ENCODE measurements at regions of chr5 and their contacts with region 1.

Region 1: GRCh38 chr5:146173597-146173996 is 8.9 kb downstream of the LARS1 start:
- DNase-seq: no peak
- H3K4me3 ChIP-seq: no peak overlapping the region
- H3K27ac ChIP-seq: no peak overlapping the region
- H3K4me1 ChIP-seq: no peaks in the 10 kb centered on the region
- H3K27me3 ChIP-seq: no peaks in the 10 kb centered on the region
- CTCF ChIP-seq: no peak
- POLR2A ChIP-seq: no peak

Region 2: GRCh38 chr5:145307866-145308382 is 865.7 kb before region 1 on chr5:
- CTCF ChIA-PET with region 1: no interaction called
- POLR2A ChIA-PET with region 1: no interaction called
- dilution Hi-C with region 1: no loop called
- intact Hi-C with region 1: loop called (anchors 5 kb)
- DNase-seq: no peak
- H3K4me3 ChIP-seq: no peak overlapping the region
- H3K27ac ChIP-seq: no peak overlapping the region
- H3K4me1 ChIP-seq: no peaks in the 10 kb centered on the region
- H3K27me3 ChIP-seq: no peaks in the 10 kb centered on the region
- CTCF ChIP-seq: no peak
- POLR2A ChIP-seq: no peak

Region 3: DNA sequence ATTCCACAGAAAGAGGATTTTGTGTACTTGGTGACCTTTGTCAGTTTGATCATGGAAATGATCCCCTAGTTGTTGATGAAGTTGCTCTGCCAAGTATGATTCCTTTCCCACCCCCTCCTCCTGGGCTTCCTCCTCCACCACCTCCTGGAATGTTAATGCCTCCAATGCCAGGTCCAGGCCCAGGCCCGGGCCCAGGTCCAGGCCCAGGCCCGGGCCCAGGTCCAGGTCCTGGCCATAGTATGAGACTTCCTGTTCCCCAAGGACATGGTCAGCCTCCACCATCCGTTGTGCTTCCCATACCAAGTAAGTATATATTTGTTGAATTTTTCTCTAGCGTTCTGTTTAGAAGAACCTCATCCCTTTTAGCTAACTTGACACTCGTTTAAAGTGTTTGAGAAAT is 59.8 kb after region 1 on chr5:
- CTCF ChIA-PET with region 1: no interaction called
- POLR2A ChIA-PET with region 1: no interaction called
- dilution Hi-C with region 1: no loop called
- intact Hi-C with region 1: no loop called
- DNase-seq: no peak
- H3K4me3 ChIP-seq: no peak overlapping the region
- H3K27ac ChIP-seq: no peak overlapping the region
- H3K4me1 ChIP-seq: no peaks in the 10 kb centered on the region
- H3K27me3 ChIP-seq: no peaks in the 10 kb centered on the region
- CTCF ChIP-seq: no peak
- POLR2A ChIP-seq: no peak